Posterior vena cava (tissue), 2 donors: ENCODE measurements at regions of chr17 and their contacts with region 1.

Region 1: DNA sequence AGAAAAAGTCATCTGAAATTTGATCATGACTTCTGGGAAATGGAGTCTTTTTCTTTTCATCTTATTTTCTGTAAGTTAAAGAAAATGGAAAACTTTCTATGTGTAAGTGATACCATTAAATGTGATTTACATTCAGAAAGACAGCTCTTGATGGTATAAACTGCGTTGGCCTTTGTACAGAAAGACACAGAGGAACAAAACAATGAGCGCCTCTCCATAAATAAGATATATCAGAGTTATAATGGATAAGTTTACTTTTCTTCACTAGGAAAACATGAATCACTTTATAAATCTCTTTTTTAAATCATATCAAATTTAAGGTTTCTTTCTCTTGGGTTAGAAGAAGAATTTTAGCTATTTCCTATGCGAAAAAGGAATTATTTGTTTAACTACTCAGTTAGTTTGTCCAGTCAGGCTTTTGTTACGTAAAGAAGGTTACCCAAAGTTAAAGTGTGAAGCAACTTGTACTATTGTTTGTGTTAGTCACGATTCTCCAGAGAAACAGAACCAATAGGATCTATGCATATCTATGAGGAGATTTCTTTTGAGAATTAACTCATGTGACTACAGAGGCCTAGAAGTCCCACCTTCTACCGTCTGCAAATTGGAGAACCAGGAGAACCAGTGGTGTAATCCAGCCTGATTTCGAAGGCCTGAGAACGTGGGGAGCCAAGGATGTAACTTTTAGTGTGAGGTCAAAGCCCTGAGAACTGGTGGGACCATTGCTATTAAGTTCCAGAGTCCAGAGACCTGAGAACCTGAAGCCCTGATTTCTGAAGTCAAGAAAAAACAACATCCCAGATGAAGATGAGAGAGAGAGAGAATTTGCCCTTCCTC is 295.4 kb upstream of the KCNJ16 start:
- DNase-seq: no peak

Region 2: GRCh38 chr17:69719474-69720048 is 60.0 kb before region 1 on chr17:
- intact Hi-C with region 1: loop called in 1 of 2 experiments (anchors 2 kb)
- DNase-seq: no peak